Ascending aorta (tissue), 2 donors: ENCODE measurements at regions of chr6 and their contacts with region 1.

Region 1: DNA sequence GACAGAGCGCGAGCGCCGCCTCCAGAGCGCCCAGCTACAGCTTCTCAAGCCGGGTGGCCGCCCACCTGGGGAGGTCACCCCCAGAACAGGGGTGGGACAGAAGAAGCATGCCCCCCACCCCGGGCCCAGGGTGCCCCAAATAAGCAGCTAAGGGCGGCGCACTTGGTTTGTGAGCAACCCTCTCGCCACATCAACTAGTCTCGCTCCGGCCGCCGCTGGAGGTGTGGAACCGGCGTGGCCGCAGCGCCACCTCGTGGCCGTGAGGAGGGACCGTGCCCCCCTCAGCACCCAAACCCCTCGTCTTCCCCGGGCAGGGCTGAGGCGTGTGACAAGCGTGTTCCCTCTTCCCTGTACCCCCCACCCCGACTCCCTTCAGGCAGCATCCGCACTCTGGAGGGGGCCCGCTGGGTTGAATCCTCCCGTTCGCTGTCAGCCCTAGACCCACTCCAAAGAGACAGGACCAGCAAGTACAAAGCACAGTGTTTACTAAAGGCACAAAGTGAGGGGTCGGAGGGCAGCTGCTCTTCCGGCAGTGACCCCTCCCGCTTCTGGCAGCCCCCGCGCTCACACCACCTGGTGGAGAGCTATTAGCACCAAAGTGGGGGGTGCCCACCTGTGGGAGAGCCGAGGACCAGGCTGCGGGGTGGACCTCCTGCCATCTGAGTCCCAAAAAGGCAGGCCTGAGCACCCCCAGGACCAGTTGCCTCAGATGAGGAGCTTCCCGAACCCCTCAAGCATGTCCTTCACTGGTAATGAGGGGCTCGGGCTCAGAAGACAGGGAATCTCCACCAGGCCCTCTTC is 45.4 kb downstream of the MDFI start:
- DNase-seq: peak in 1 of 2 donors; percentile 86
- H3K4me3 ChIP-seq: peak overlapping the region; percentile 53 to 64
- H3K27ac ChIP-seq: peak overlapping the region; percentile 33 to 52
- H3K4me1 ChIP-seq: peaks cover 5 to 14% of the 10 kb centered on the region in 2 donors
- H3K27me3 ChIP-seq: no peaks in the 10 kb centered on the region
- CTCF ChIP-seq: peak; percentile 73 to 94 (median 92)

Region 2: DNA sequence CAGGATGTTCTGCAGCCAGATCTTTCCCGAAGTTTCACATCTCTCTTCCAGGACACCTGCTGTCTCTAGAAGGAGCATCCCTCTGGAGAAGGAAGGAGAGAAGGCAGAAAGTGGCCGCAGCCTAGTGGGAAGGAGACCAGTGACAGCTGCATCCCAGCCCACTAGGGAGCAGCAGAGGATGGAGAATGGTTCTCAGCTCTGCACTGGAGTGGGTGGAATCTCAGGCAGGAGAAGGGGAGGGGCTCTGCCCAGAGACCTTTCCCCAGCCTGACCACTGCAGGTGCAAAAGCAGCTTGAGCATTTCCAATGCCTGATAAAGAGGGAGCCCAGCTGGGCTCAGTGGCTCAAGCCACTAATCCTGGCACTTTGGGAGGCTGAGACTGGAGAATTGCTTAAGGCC is 316.0 kb before region 1 on chr6:
- intact Hi-C with region 1: loop called (anchors 1 kb)
- DNase-seq: no peak
- H3K4me3 ChIP-seq: no peak overlapping the region
- H3K27ac ChIP-seq: no peak overlapping the region
- H3K4me1 ChIP-seq: peaks cover 3 to 5% of the 10 kb centered on the region in 2 donors
- H3K27me3 ChIP-seq: peaks cover 5% of the 10 kb centered on the region
- CTCF ChIP-seq: peak in 2 of 3 experiments; percentile 18 to 34

Region 3: DNA sequence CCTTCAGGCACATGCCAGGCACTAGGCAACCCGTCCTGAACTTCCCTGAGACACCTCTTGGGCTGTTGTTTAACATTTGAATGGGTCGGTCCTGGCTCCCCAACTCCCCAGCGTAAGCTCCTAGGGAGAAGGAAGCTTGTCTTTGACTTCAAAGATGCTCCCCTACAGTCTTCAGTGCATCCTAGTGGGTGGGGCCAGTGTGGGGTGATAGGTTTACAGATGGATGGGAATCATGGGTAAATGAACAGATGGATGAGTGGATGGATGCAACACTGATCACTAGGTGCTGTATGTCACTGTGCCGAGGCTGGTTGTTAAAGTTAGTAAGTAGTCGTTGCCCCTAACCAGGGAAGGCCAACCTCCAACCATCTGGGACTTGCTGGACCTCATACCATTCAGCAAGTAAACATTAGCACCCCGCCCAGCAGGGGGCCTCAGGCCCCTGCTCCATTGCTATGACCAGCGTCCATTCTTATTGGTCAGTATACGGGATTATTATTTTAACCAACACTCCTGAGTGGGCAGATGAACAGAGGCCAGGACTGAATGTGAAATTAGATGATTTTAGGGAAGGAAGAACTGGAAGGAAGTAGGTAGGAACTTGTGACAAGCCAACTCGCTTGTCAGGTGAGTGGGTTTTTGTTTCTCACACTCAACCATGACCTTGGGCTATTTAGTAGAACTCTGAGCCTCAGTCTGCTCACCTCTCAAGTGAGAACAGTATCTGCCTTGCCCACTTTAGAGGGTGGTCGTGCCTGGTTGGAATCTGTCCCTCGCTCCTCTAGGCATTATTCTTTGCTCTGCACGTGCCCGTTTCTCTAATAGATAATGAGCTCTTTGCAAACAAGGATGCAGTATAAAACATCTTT is 220.4 kb before region 1 on chr6:
- intact Hi-C with region 1: loop called (anchors 5 kb)
- DNase-seq: peak; percentile 14 to 81
- H3K4me3 ChIP-seq: no peak overlapping the region
- H3K27ac ChIP-seq: no peak overlapping the region
- H3K4me1 ChIP-seq: no peaks in the 10 kb centered on the region
- H3K27me3 ChIP-seq: no peaks in the 10 kb centered on the region
- CTCF ChIP-seq: peak; percentile 53 to 73 (median 59)

Region 4: GRCh38 chr6:41602864-41603608 is 80.7 kb before region 1 on chr6:
- intact Hi-C with region 1: loop called (anchors 1 kb)
- DNase-seq: peak in 1 of 2 donors; percentile 84
- H3K4me3 ChIP-seq: peak overlapping the region; percentile 23 to 27
- H3K27ac ChIP-seq: no peak overlapping the region
- H3K4me1 ChIP-seq: peaks cover 0 to 3% of the 10 kb centered on the region in 2 donors
- H3K27me3 ChIP-seq: no peaks in the 10 kb centered on the region
- CTCF ChIP-seq: peak; percentile 75 to 92 (median 90)

Region 5: DNA sequence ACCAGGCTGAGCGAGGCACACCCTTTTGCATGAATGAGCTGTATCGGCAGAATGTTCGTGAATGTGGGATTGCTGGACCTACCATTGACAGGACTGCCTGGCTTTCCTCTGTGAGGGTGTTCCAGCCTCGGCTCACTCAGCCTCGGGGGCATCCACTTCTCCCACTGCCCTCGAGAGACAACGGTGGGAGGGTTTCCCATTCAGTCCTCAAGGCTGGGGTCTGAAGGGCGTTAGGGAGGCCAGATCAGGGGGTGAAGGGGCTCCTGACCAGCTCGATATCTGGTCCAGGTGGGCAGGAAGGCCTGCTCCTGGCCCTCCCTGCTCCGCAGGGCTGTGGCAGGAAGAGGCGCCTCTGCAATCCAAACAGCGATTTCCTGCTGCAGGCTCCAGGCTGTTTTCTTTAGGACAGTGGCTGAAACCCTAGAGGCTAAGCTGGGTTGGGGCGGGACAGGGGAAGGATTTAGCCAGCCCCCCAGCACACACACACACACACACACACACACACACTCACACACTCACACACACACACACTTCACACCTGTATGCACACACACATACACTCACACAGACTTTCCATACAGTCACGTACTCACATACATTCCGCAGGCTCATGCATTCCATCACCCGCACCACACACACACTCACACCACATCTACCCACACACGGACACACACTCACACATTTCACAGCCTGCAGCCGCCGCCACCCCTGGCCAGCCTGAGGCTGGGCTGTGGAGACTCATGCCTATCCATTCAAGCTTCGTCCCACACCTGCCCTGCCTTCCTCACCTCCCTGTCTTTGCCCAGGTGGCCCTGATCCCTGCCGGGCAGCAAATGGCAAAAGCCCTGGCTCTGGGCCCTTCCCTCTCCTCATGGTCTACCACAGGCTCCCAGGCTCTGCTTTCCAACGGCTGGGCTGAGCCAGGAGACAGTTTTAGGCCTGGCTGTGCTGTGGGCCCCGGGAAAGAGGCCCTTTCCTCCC is 27.7 kb before region 1 on chr6:
- intact Hi-C with region 1: no loop called
- DNase-seq: no peak
- H3K4me3 ChIP-seq: no peak overlapping the region
- H3K27ac ChIP-seq: no peak overlapping the region
- H3K4me1 ChIP-seq: no peaks in the 10 kb centered on the region
- H3K27me3 ChIP-seq: no peaks in the 10 kb centered on the region
- CTCF ChIP-seq: no peak